Activated naive CD4-positive, alpha-beta T cell treated with anti-CD3 and anti-CD28 coated beads, Interleukin-2, amount 10 ng/mL, durations not matched to agents 7 days and 5 days (primary cell): ENCODE measurements at regions of chr10 and their contacts with region 1.

Region 1: DNA sequence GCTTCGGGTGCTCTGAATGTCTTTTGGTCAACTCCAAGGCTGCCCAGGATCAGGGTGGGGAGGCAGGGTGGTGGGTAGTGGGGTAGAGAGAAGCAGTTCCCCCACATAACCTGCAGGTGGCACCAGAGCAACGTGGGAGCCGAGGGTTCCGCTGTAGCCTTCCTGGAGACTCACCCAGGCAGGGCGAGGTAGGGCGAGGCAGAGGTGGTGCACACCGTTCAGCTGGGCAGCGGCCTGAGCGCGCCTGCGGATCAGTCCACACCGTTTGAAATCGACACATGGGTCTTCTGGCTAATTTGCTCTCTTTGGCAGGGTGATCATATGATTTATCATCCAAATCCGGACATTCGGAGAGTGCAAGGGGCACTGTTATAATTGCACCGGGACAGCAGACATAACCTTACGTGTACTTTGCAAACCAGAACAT is 41.4 kb upstream of the MAP3K8 start:
- DNase-seq: peak; percentile 83
- H3K4me3 Mint-ChIP-seq: no peak overlapping the region
- H3K27ac Mint-ChIP-seq: no peak overlapping the region
- H3K4me1 Mint-ChIP-seq: peaks cover 4% of the 10 kb centered on the region
- H3K27me3 Mint-ChIP-seq: peaks cover 33% of the 10 kb centered on the region

Region 2: DNA sequence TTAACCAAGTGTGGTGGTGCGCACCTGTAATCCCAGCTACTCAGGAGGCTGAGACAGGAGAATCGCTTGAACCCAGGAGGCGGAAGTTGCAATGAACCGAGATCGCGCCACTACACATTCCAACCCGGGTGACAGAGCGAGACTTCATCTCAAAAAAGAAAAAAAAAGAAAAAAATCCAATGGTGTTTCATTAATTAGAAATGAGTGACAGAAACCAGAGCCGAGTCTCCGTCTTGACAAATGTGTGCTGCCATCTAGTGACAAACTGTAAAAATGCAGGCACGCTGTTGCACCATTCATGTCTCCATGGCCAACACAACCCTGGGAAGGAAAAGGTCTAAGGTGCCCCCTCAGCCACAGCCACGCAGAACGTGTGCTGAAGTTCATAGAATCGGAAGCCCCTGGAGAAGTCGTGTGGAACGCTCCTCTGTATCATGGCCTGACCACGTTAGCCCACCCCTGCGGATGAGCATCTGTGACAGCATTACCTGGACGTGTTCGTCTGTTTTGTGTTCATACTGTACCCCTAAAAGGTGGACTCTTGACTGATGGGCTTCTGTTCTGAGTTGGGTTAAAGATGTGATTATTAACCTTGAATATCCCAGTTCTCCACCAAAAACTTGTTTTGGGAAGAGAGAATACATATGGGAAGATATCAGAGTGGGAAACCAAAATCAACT is 142.0 kb after region 1 on chr10:
- CTCF ChIA-PET with region 1: interaction called, 26 read pairs
- DNase-seq: peak; percentile 82
- H3K4me3 Mint-ChIP-seq: no peak overlapping the region
- H3K27ac Mint-ChIP-seq: no peak overlapping the region
- H3K4me1 Mint-ChIP-seq: peaks cover 41% of the 10 kb centered on the region
- H3K27me3 Mint-ChIP-seq: peaks cover 4% of the 10 kb centered on the region

Region 3: GRCh38 chr10:30550967-30551815 is 158.6 kb after region 1 on chr10:
- CTCF ChIA-PET with region 1: no interaction called
- DNase-seq: no peak
- H3K4me3 Mint-ChIP-seq: no peak overlapping the region
- H3K27ac Mint-ChIP-seq: no peak overlapping the region
- H3K4me1 Mint-ChIP-seq: peaks cover 5% of the 10 kb centered on the region
- H3K27me3 Mint-ChIP-seq: peaks cover 18% of the 10 kb centered on the region

Region 4: DNA sequence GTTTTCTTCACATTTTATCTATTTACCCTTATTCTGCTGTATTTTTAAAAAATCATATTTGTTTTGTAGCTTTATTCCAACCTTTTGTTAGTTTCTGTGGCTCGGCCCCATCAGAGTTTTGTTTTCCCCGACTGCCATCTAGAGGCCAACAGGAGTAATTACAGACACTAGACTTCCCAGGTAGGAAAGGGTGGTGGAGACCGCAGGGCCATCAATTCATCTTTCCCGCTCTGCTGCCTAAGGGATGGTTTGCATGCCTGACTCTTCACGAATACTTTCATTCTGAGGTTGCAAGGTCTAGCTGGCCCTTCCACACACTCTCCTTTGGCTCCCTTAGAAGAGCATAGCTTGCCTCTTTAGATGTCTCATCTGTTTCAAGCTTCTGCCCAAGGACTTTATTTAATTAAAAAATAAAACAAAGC is 198.7 kb after region 1 on chr10:
- CTCF ChIA-PET with region 1: interaction called, 94 read pairs
- DNase-seq: peak; percentile 55
- H3K4me3 Mint-ChIP-seq: no peak overlapping the region
- H3K27ac Mint-ChIP-seq: no peak overlapping the region
- H3K4me1 Mint-ChIP-seq: no peaks in the 10 kb centered on the region
- H3K27me3 Mint-ChIP-seq: peaks cover 46% of the 10 kb centered on the region

Region 5: GRCh38 chr10:30671026-30671616 is 278.5 kb after region 1 on chr10:
- CTCF ChIA-PET with region 1: interaction called, 11 read pairs
- DNase-seq: no peak
- H3K4me3 Mint-ChIP-seq: peak overlapping the region; percentile 12
- H3K27ac Mint-ChIP-seq: no peak overlapping the region
- H3K4me1 Mint-ChIP-seq: peaks cover 9% of the 10 kb centered on the region
- H3K27me3 Mint-ChIP-seq: peaks cover 34% of the 10 kb centered on the region